Natural killer cell (primary cell): ENCODE measurements at regions of chr1 and their contacts with region 1.

Region 1: DNA sequence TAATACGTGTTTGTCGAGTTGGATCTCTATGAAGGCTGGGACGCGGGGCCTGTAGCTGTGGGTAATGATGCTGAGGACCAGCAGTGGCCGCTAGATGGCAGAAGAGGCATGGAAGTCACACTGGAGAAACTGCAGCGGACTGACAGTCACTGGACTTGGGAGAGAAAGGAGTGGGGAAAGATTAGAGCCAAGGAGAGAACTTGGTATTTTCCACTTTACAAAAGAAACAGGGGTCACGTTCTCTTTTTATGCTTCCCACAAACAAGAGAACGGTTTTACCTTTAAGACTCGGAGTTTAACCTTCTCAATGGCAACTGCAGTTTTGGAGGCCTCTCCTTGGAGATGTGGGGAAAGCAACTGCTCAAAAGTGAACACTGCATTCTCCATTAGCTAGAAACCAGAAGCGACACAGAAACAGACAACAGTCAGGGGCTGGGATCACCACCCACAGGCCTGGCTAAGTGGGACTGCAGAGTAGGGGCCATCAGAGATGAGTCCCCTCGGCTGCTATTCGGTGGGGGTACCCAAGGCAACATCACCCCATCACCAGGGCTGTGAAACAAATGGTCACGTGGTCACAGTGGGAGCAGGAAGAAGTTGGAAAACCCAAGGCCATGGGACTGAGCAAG is 51.1 kb upstream of the EDEM3 start:
- DNase-seq: peak; percentile 79 to 92
- ATAC-seq: peak; percentile 88 to 100 (median 98)
- H3K4me3 ChIP-seq: no peak overlapping the region
- H3K4me3 Mint-ChIP-seq: no peak overlapping the region
- H3K27ac ChIP-seq: no peak overlapping the region
- H3K27ac Mint-ChIP-seq: peak overlapping the region in 1 of 2 donors; percentile 66
- H3K4me1 ChIP-seq: peaks cover 7% of the 10 kb centered on the region
- H3K4me1 Mint-ChIP-seq: peaks cover 6% of the 10 kb centered on the region in 2 donors
- H3K27me3 ChIP-seq: no peaks in the 10 kb centered on the region
- H3K27me3 Mint-ChIP-seq: no peaks in the 10 kb centered on the region
- CTCF ChIP-seq: peak; percentile 94

Region 2: DNA sequence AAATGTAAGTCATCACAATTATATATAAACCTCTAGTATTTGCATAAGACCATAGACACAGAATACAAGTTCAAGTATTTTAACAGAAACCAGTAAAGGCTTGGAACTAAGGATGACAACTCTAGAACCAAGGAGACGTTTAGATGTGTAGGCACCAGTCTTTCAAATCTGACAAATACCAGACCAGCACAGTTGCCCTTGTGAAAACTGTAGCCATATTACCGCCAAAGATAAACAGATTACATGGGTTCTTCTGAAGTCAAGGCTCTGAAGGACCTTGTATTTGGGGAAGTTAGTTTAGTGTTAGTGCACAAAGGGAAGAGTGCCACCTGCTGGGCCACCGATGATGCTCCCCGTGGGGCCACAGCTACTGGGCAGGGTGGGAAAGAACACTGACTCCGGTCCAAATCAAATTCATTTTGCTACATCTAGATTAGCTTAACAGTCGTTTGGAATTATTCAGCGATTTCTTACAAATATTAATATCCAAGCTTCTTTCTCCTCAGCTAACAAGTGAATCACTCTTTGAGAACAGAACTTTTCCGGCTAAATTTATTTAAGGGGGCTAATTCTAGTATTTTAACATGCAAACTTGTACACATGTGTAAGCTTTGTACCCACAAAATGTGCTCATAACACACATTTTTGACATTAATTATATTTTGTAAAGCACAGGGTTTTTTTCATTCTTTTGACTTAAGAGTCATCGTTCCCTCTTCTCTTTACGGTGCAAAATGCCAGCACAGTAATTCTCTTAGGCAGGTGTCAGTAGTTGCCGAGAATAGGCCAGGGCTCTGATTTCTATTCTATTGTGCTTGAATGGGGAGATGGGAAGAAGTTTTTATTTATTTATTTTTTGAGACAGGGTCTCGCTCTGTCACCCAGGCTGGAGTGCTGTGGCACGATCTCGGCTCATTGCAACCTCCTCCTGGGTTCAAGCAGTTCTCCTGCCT is 176.5 kb after region 1 on chr1:
- intact Hi-C with region 1: loop called (anchors 1 kb)
- DNase-seq: peak; percentile 68 to 88
- ATAC-seq: peak; percentile 97 to 100 (median 100)
- H3K4me3 ChIP-seq: no peak overlapping the region
- H3K4me3 Mint-ChIP-seq: no peak overlapping the region
- H3K27ac ChIP-seq: no peak overlapping the region
- H3K27ac Mint-ChIP-seq: peak overlapping the region in 1 of 2 donors; percentile 63
- H3K4me1 ChIP-seq: no peaks in the 10 kb centered on the region
- H3K4me1 Mint-ChIP-seq: peaks cover 6% of the 10 kb centered on the region in 2 donors
- H3K27me3 ChIP-seq: peaks cover 2% of the 10 kb centered on the region
- H3K27me3 Mint-ChIP-seq: peaks cover 22 to 29% of the 10 kb centered on the region in 2 donors
- CTCF ChIP-seq: peak; percentile 90

Region 3: GRCh38 chr1:185170291-185170848 is 364.6 kb after region 1 on chr1:
- intact Hi-C with region 1: loop called (anchors 1 kb)
- DNase-seq: peak in 1 of 2 donors; percentile 74
- ATAC-seq: peak; percentile 53 to 82 (median 80)
- H3K4me3 ChIP-seq: no peak overlapping the region
- H3K4me3 Mint-ChIP-seq: no peak overlapping the region
- H3K27ac ChIP-seq: no peak overlapping the region
- H3K27ac Mint-ChIP-seq: no peak overlapping the region
- H3K4me1 ChIP-seq: no peaks in the 10 kb centered on the region
- H3K4me1 Mint-ChIP-seq: peaks cover 0 to 5% of the 10 kb centered on the region in 2 donors
- H3K27me3 ChIP-seq: no peaks in the 10 kb centered on the region
- H3K27me3 Mint-ChIP-seq: no peaks in the 10 kb centered on the region
- CTCF ChIP-seq: peak; percentile 55